ENCODE measurements at regions of chr12 and their contacts with region 1.

Region 1: DNA sequence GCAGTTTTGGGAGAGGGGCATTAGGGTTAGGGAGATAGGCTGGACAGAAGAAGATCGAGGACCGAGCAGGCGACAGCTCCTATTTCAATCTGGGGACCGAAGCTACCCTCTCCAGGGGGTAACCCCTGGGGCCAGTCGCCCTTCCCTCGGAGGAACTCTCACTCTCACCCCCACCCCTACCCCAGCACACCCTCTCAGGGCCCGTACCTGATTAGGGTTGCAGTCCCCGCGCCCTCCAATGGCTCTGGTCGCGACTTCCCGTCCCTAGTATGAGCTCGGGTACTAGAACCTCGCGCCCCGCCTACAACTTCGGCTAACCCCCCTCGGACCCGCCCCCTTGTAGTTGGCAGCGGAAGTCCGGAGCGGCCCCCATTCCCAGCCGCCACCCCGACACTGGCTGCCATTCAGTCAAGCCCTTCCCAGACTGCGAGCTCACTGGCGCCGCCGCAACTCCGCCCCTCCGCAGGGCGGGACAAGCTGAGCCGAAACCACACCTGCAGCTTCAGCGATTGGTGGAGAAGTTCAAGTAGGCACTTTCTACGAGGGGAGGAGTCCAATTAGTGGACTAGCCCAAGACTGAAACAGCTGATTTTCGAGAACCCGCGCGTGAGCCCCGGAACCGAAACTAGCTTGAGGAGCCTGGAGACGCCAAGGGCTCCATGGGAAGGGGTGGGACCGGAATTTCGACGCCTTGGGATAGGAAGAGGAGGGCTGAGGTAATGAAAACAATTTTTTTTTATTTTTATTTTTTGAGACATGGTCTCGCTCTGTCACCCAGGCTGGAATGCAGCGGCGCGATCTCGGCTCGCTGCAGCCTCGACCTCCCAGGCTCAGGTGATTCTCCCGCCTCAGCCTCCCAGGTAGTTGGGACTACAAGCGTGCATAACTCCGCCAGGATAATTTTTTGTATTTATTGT is at the start of gene STAT2:
- DNase-seq: peak; percentile 97 to 100 (median 99)
- ATAC-seq: peak; percentile 94
- H3K4me3 ChIP-seq: peak within 1 kb of the TSS; percentile 90
- H3K4me3 Mint-ChIP-seq: peak within 1 kb of the TSS; percentile 99
- H3K27ac ChIP-seq: peak within 1 kb of the TSS; percentile 54 to 79
- H3K27ac Mint-ChIP-seq: peak within 1 kb of the TSS; percentile 93
- H3K4me1 ChIP-seq: peaks cover 27% of the 10 kb centered on the region
- H3K4me1 Mint-ChIP-seq: peaks cover 33% of the 10 kb centered on the region
- H3K27me3 ChIP-seq: no peaks in the 10 kb centered on the region
- H3K27me3 Mint-ChIP-seq: no peaks in the 10 kb centered on the region
- CTCF ChIP-seq: no peak
- total RNA-seq, gene STAT2: 114 to 125 TPM

Region 2: DNA sequence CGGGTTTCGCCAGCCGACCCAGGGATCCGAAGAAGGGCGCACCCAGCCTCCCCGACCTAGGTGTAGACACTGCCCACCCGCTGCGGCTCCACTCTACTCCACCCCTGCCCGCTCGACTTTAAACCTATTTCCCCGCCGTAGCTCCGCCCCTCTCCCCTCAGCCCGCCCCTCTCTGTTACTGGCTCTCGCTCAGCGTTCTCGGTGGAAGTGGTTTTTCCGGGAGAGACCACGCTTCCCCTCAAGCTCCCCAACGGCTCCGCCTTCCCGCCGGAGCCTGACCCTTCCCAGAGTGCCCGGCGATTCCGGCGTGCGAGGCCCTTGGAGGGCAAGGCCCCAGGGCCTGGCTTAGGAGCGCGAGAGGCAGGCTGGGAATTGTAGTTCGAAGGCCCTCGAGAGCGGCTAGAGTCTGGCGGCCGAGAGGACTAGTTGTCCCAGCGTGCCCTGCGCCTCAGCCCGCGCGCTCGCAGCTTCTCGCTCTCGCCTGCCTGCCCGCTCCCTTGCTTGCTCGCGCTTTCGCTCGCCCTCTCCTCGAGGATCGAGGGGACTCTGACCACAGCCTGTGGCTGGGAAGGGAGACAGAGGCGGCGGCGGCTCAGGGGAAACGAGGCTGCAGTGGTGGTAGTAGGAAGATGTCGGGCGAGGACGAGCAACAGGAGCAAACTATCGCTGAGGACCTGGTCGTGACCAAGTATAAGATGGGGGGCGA is 255.8 kb before region 1 on chr12 and contains the start of gene PA2G4:
- CTCF ChIA-PET with region 1: no interaction called
- POLR2A ChIA-PET with region 1: interaction called, 13 read pairs
- intact Hi-C with region 1: no loop called
- DNase-seq: peak; percentile 89 to 99 (median 96)
- ATAC-seq: peak; percentile 88
- H3K4me3 ChIP-seq: peak within 1 kb of the TSS; percentile 90
- H3K4me3 Mint-ChIP-seq: peak within 1 kb of the TSS; percentile 93
- H3K27ac ChIP-seq: peak within 1 kb of the TSS; percentile 63 to 95
- H3K27ac Mint-ChIP-seq: peak within 1 kb of the TSS; percentile 100
- H3K4me1 ChIP-seq: peaks cover 48% of the 10 kb centered on the region
- H3K4me1 Mint-ChIP-seq: peaks cover 67% of the 10 kb centered on the region
- H3K27me3 ChIP-seq: no peaks in the 10 kb centered on the region
- H3K27me3 Mint-ChIP-seq: no peaks in the 10 kb centered on the region
- CTCF ChIP-seq: no peak
- total RNA-seq, gene PA2G4: 51.0 to 61.0 TPM

Region 3: GRCh38 chr12:56299853-56300643 is 60.1 kb before region 1 on chr12 and contains the start of gene CS:
- CTCF ChIA-PET with region 1: no interaction called
- POLR2A ChIA-PET with region 1: interaction called, 16 read pairs
- intact Hi-C with region 1: loop called in 1 of 2 experiments (anchors 1 kb)
- DNase-seq: peak; percentile 95 to 99 (median 98)
- ATAC-seq: peak; percentile 91
- H3K4me3 ChIP-seq: peak within 1 kb of the TSS; percentile 72
- H3K4me3 Mint-ChIP-seq: peak within 1 kb of the TSS; percentile 98
- H3K27ac ChIP-seq: peak within 1 kb of the TSS; percentile 91 to 96
- H3K27ac Mint-ChIP-seq: peak within 1 kb of the TSS; percentile 97
- H3K4me1 ChIP-seq: peaks cover 56% of the 10 kb centered on the region
- H3K4me1 Mint-ChIP-seq: peaks cover 68% of the 10 kb centered on the region
- H3K27me3 ChIP-seq: no peaks in the 10 kb centered on the region
- H3K27me3 Mint-ChIP-seq: no peaks in the 10 kb centered on the region
- CTCF ChIP-seq: no peak
- total RNA-seq, gene CS: 139 to 145 TPM

Region 4: GRCh38 chr12:56341616-56342015 is 18.5 kb before region 1 on chr12:
- CTCF ChIA-PET with region 1: interaction called, 10 read pairs
- POLR2A ChIA-PET with region 1: interaction called, 150 read pairs
- intact Hi-C with region 1: loop called (anchors 1 kb)
- DNase-seq: no peak
- ATAC-seq: no peak
- H3K4me3 ChIP-seq: no peak overlapping the region
- H3K4me3 Mint-ChIP-seq: no peak overlapping the region
- H3K27ac ChIP-seq: peak overlapping the region; percentile 44 to 52
- H3K27ac Mint-ChIP-seq: peak overlapping the region; percentile 75
- H3K4me1 ChIP-seq: peaks cover 37% of the 10 kb centered on the region
- H3K4me1 Mint-ChIP-seq: peaks cover 44% of the 10 kb centered on the region
- H3K27me3 ChIP-seq: no peaks in the 10 kb centered on the region
- H3K27me3 Mint-ChIP-seq: no peaks in the 10 kb centered on the region
- CTCF ChIP-seq: no peak

Region 5: DNA sequence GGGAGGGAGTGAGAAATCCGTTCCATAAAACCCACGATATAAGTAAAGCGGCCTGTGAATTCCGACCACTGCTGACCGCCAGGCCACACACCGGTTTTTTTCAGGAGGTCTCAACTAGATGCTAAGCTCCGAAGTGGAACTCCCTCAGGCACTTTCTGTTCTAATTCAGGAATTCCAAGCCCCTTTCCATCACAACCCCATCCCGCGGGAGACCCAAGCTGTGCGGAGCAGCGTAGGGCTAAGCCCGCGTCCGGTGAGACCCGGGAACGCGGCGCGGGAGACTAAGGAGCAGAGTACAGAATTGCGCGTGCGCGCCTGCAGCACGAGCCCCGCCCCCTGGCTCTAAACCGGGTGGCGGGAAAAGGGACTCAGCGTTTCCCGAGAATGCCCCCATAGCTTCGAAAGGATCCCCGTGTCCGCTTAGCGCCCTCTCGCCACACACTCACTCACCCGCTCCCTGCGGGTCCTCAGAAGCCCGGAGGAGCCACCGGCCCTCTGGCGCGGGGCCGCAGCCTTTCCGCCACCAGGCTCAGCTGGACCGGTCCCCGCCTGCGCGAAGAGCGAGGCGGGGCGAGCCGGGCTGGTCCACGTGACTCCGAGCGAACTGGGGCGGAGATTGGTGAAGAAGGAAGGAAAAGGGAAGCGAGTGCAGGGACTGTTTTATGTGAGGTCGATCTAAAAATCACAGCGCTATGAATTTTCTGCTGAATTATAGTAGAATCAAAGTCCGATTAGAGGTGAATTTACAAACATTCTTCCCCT is 88.9 kb after region 1 on chr12 and contains the start of gene TIMELESS:
- CTCF ChIA-PET with region 1: no interaction called
- POLR2A ChIA-PET with region 1: interaction called, 42 read pairs
- intact Hi-C with region 1: no loop called
- DNase-seq: peak; percentile 62 to 93 (median 78)
- ATAC-seq: peak; percentile 96
- H3K4me3 ChIP-seq: peak within 1 kb of the TSS; percentile 70
- H3K4me3 Mint-ChIP-seq: peak within 1 kb of the TSS; percentile 93
- H3K27ac ChIP-seq: peak within 1 kb of the TSS; percentile 25 to 77
- H3K27ac Mint-ChIP-seq: peak within 1 kb of the TSS; percentile 92
- H3K4me1 ChIP-seq: peaks cover 12% of the 10 kb centered on the region
- H3K4me1 Mint-ChIP-seq: peaks cover 21% of the 10 kb centered on the region
- H3K27me3 ChIP-seq: no peaks in the 10 kb centered on the region
- H3K27me3 Mint-ChIP-seq: no peaks in the 10 kb centered on the region
- CTCF ChIP-seq: no peak
- total RNA-seq, gene TIMELESS: 3.0 to 3.1 TPM

Region 6: GRCh38 chr12:56630160-56630632 is 270.1 kb after region 1 on chr12 and contains the start of gene BAZ2A:
- CTCF ChIA-PET with region 1: no interaction called
- POLR2A ChIA-PET with region 1: interaction called, 10 read pairs
- intact Hi-C with region 1: loop called in 1 of 2 experiments (anchors 5 kb)
- DNase-seq: peak; percentile 71 to 93 (median 81)
- ATAC-seq: peak; percentile 72
- H3K4me3 ChIP-seq: peak within 1 kb of the TSS; percentile 100
- H3K4me3 Mint-ChIP-seq: peak within 1 kb of the TSS; percentile 93
- H3K27ac ChIP-seq: peak within 1 kb of the TSS; percentile 88 to 96
- H3K27ac Mint-ChIP-seq: peak within 1 kb of the TSS; percentile 94
- H3K4me1 ChIP-seq: peaks cover 65% of the 10 kb centered on the region
- H3K4me1 Mint-ChIP-seq: peaks cover 78% of the 10 kb centered on the region
- H3K27me3 ChIP-seq: no peaks in the 10 kb centered on the region
- H3K27me3 Mint-ChIP-seq: no peaks in the 10 kb centered on the region
- CTCF ChIP-seq: no peak
- total RNA-seq, gene BAZ2A: 207 to 211 TPM

Measured in CD4-positive, alpha-beta T cell (primary cell).